Naive thymus-derived CD4-positive, alpha-beta T cell (primary cell): ENCODE measurements at regions of chr16 and their contacts with region 1.

Region 1: DNA sequence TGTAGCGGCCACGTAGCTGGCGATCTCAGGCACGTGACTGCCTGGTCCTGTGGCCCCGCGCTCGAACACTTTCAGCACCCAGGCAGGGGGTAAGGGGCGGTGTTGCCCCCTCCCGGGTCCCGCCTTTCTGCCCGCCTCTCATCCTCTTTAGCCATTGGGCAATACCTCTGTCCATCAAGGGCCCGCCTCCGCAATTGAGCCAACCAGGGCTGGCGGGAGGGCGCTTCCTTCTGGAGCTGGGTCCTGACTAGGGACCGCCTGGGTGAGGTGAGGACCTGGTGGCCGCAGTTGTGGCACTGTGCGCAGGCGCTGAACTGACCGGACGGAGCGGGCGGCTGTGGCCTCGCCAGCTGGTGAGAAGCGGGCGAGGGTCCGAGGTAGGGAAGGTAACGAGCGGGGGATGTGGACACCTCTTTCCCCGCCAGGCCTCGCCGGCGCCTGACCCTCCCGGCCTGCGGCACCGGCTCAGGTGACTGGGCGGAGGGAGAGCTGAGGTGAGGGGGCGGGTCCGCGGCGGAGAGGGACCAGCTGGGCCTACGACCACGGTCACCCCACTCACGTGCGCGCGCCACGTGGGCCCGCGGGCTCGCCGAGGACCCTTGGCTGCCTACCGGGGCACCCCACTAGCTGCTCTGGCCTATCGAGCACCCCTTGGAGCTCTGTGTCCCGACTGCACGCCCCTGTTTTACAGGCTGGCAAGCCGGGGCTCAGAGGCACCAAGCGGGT is at the start of gene PDP2:
- DNase-seq: peak; percentile 73 to 92 (median 90)
- ATAC-seq: peak; percentile 99
- H3K4me3 ChIP-seq: peak within 1 kb of the TSS; percentile 86
- H3K4me3 Mint-ChIP-seq: peak within 1 kb of the TSS; percentile 92 to 100 (median 99)
- H3K27ac ChIP-seq: peak within 1 kb of the TSS; percentile 67
- H3K27ac Mint-ChIP-seq: peak within 1 kb of the TSS; percentile 89 to 98 (median 92)
- H3K4me1 ChIP-seq: peaks cover 4 to 12% of the 10 kb centered on the region in 2 donors
- H3K4me1 Mint-ChIP-seq: peaks cover 16 to 51% (median 31%) of the 10 kb centered on the region in 7 donors
- H3K27me3 ChIP-seq: no peaks in the 10 kb centered on the region
- H3K27me3 Mint-ChIP-seq: no peaks in the 10 kb centered on the region
- total RNA-seq, gene PDP2: 4.5 to 24.0 (median 15.9) TPM

Region 2: GRCh38 chr16:66934153-66934838 is 53.8 kb after region 1 on chr16 and contains the start of gene CIAO2B:
- CTCF ChIA-PET with region 1: no interaction called
- POLR2A ChIA-PET with region 1: interaction called, 4 read pairs
- intact Hi-C with region 1: loop called (anchors 5 kb)
- DNase-seq: peak; percentile 86 to 95 (median 91)
- ATAC-seq: peak; percentile 93
- H3K4me3 ChIP-seq: peak within 1 kb of the TSS; percentile 96
- H3K4me3 Mint-ChIP-seq: peak within 1 kb of the TSS; percentile 91 to 99 (median 98)
- H3K27ac ChIP-seq: peak within 1 kb of the TSS; percentile 97
- H3K27ac Mint-ChIP-seq: peak within 1 kb of the TSS; percentile 96 to 99 (median 98)
- H3K4me1 ChIP-seq: peaks cover 24 to 35% of the 10 kb centered on the region in 2 donors
- H3K4me1 Mint-ChIP-seq: peaks cover 38 to 63% (median 54%) of the 10 kb centered on the region in 7 donors
- H3K27me3 ChIP-seq: no peaks in the 10 kb centered on the region
- H3K27me3 Mint-ChIP-seq: no peaks in the 10 kb centered on the region
- total RNA-seq, gene CIAO2B: 47.0 to 116 (median 58.5) TPM